IMR-90 (cell line): ENCODE measurements at regions of chr2 and their contacts with region 1.

Region 1: GRCh38 chr2:177239932-177240630 is 24.4 kb downstream of the NFE2L2 start:
- DNase-seq: peak; percentile 49
- ATAC-seq: no peak
- H3K4me3 ChIP-seq: no peak overlapping the region
- H3K27ac ChIP-seq: peak overlapping the region; percentile 82
- H3K4me1 ChIP-seq: peaks cover 32% of the 10 kb centered on the region
- H3K27me3 ChIP-seq: no peaks in the 10 kb centered on the region
- CTCF ChIP-seq: no peak
- POLR2A ChIP-seq: no peak
- RAD21 ChIP-seq: no peak

Region 2: GRCh38 chr2:177093371-177093770 is 146.7 kb before region 1 on chr2:
- CTCF ChIA-PET with region 1: no interaction called
- POLR2A ChIA-PET with region 1: no interaction called
- dilution Hi-C with region 1: no loop called
- in situ Hi-C with region 1: no loop called
- intact Hi-C with region 1: no loop called
- DNase-seq: no peak
- ATAC-seq: no peak
- H3K4me3 ChIP-seq: no peak overlapping the region
- H3K27ac ChIP-seq: no peak overlapping the region
- H3K4me1 ChIP-seq: no peaks in the 10 kb centered on the region
- H3K27me3 ChIP-seq: no peaks in the 10 kb centered on the region
- CTCF ChIP-seq: no peak
- POLR2A ChIP-seq: no peak
- RAD21 ChIP-seq: no peak

Region 3: DNA sequence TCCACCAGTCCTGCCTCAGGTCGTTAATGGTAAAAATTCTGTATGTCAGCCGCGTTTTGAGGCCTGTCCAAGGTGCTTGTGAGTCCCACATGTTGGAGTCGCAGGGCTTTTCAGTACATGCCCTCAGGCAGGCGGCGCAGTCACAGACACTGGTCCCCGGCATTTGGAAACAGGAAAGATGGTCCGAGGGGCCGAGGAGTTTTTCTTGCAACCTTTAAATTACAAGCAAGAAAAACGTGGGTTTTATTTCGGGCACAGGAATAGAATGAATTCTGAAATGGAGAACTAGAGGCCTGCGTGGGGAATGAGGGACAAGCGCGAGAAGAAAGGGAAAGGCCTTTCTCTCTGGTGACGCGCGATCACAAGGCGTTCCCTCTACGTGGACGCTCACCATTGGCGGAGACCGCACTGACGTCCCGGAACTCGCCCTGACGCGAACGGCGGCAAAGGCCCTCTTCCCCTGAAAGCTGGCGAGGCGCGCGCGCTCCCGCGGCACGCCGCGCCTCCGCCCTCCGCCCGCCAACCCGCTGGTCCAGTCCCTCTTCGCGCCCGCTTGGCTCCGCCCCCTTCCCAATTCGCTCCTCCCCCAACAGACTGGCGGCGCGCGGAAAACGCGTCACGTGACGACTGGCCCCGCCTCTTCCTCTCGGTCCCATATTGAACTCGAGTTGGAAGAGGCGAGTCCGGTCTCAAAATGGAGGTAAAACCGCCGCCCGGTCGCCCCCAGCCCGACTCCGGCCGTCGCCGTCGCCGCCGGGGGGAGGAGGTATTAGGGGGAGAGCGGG is 27.8 kb before region 1 on chr2 and contains the start of gene HNRNPA3:
- CTCF ChIA-PET with region 1: no interaction called
- POLR2A ChIA-PET with region 1: no interaction called
- dilution Hi-C with region 1: no loop called
- in situ Hi-C with region 1: no loop called
- intact Hi-C with region 1: loop called (anchors 2 kb)
- DNase-seq: peak; percentile 99
- ATAC-seq: peak; percentile 92
- H3K4me3 ChIP-seq: peak within 1 kb of the TSS; percentile 74
- H3K27ac ChIP-seq: peak within 1 kb of the TSS; percentile 94
- H3K4me1 ChIP-seq: no peaks in the 10 kb centered on the region; the same call in none of the 2 replicates
- H3K27me3 ChIP-seq: no peaks in the 10 kb centered on the region
- CTCF ChIP-seq: no peak
- POLR2A ChIP-seq: peak; percentile 95
- RAD21 ChIP-seq: no peak
- total RNA-seq, gene HNRNPA3: 18.6 and 35.6 TPM in 2 replicates